H1 (cell line): ENCODE measurements at regions of chr1 and their contacts with region 1.

Region 1: DNA sequence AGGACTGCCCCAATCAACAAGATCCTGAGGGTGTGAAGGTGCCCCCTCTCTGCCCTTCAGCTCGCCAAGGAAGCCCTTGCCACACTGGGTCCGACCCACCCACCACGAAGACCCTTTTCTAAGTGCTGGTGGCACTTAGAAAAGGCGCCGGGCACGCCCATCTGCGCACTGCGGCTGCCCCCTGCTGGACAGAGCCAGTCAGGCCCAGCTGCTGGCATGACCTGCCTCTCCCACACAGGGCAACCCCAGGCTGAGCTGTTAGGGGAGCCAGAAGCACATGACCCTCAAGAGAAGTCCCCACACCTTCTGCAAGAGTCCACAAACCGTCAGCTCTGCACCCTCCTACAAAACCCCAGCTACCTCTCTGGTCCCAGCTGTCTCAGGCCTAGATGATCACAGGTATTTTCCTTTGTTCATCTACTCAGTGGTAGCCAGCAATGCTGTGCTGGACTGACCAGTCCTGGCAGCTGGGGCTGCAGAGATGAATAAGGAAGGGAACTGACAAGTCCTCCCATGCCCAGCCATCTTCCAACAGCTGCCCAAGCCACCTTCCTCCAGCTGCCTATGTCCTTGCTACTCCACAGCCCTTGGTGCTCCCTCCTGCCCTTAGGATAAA is 40.0 kb upstream of the ZC3H12A start:
- DNase-seq: peak; percentile 31 to 95
- H3K4me3 ChIP-seq: no peak overlapping the region
- H3K27ac ChIP-seq: no peak overlapping the region
- H3K4me1 ChIP-seq: peaks cover 0 to 17% (median 6%) of the 10 kb centered on the region in 4 experiments; a peak in 6 of 7 replicates
- H3K27me3 ChIP-seq: no peaks in the 10 kb centered on the region; a peak in 1 of 7 replicates
- CTCF ChIP-seq: peak; percentile 94 to 98 (median 97)
- EP300 ChIP-seq: no peak
- POLR2A ChIP-seq: no peak
- RAD21 ChIP-seq: peak; percentile 97

Region 2: GRCh38 chr1:37391211-37392011 is 43.0 kb before region 1 on chr1:
- CTCF ChIA-PET with region 1: interaction called, 34 read pairs
- POLR2A ChIA-PET with region 1: interaction called, 4 read pairs
- DNase-seq: peak in 1 of 2 experiments; percentile 57
- H3K4me3 ChIP-seq: no peak overlapping the region; a peak in 1 of 8 replicates
- H3K27ac ChIP-seq: no peak overlapping the region
- H3K4me1 ChIP-seq: peaks cover 2 to 21% (median 6%) of the 10 kb centered on the region in 4 experiments; a peak in 6 of 7 replicates
- H3K27me3 ChIP-seq: no peaks in the 10 kb centered on the region
- CTCF ChIP-seq: peak; percentile 33 to 63 (median 58)
- EP300 ChIP-seq: no peak
- POLR2A ChIP-seq: no peak
- RAD21 ChIP-seq: peak; percentile 39 to 66

Region 3: GRCh38 chr1:37399830-37400669 is 34.4 kb before region 1 on chr1:
- CTCF ChIA-PET with region 1: interaction called, 14 read pairs
- POLR2A ChIA-PET with region 1: interaction called, 5 read pairs
- DNase-seq: no peak
- H3K4me3 ChIP-seq: no peak overlapping the region
- H3K27ac ChIP-seq: no peak overlapping the region
- H3K4me1 ChIP-seq: peaks cover 0 to 4% (median 1%) of the 10 kb centered on the region in 4 experiments; a peak in 4 of 7 replicates
- H3K27me3 ChIP-seq: no peaks in the 10 kb centered on the region
- CTCF ChIP-seq: no peak
- EP300 ChIP-seq: no peak
- POLR2A ChIP-seq: no peak
- RAD21 ChIP-seq: no peak

Region 4: DNA sequence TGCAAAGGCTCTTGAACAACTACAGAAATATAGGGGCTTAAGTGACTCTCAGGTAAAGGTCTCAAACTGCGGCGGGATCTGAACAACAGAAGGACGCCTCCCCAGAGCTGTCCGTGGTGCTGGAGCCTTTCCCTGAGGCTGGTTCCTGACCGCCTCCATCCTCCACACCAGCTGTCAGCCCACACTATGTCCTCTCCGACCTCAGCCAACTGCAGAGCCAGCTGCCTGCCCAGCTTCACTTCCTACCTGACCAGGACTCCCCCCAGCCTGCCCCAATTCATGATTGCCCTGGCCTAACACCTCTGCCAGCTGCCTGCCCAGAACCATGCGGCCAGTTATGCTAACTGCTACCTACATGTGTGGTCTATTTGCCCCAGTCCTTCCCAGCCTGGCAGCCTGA is 23.6 kb before region 1 on chr1:
- CTCF ChIA-PET with region 1: interaction called, 21 read pairs
- POLR2A ChIA-PET with region 1: no interaction called
- DNase-seq: peak in 1 of 2 experiments; percentile 87
- H3K4me3 ChIP-seq: no peak overlapping the region
- H3K27ac ChIP-seq: no peak overlapping the region
- H3K4me1 ChIP-seq: peaks cover 0 to 4% (median 0%) of the 10 kb centered on the region in 4 experiments; a peak in 4 of 7 replicates
- H3K27me3 ChIP-seq: no peaks in the 10 kb centered on the region; a peak in 1 of 7 replicates
- CTCF ChIP-seq: no peak
- EP300 ChIP-seq: no peak
- POLR2A ChIP-seq: no peak
- RAD21 ChIP-seq: peak in 1 of 2 experiments; percentile 9; a peak in 1 of 4 replicates

Region 5: DNA sequence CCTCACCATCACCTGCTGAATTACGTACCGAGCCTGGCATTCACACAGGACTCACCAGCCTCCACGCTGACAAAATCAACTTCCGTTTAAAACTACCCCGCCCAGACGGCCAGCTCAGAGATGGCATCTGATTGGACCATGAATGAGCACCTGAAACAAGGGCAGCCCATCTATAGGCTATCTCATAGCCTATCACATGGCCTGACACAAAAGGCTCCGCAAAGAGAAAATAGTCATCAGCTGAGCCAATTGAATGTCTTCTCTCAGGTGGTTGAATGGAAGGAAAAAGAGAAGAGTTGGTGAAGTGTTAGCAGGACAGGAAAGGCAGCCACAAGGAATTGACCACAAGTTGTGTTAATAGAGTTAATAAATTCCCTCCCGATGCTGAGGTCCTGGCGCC is 10.6 kb before region 1 on chr1:
- CTCF ChIA-PET with region 1: interaction called, 16 read pairs
- POLR2A ChIA-PET with region 1: no interaction called
- DNase-seq: no peak
- H3K4me3 ChIP-seq: no peak overlapping the region
- H3K27ac ChIP-seq: no peak overlapping the region
- H3K4me1 ChIP-seq: no peaks in the 10 kb centered on the region
- H3K27me3 ChIP-seq: no peaks in the 10 kb centered on the region
- CTCF ChIP-seq: no peak
- EP300 ChIP-seq: no peak
- POLR2A ChIP-seq: no peak
- RAD21 ChIP-seq: no peak

Region 6: GRCh38 chr1:37449936-37450335 is 15.5 kb after region 1 on chr1:
- CTCF ChIA-PET with region 1: interaction called, 77 read pairs
- POLR2A ChIA-PET with region 1: interaction called, 4 read pairs
- DNase-seq: no peak
- H3K4me3 ChIP-seq: no peak overlapping the region
- H3K27ac ChIP-seq: no peak overlapping the region
- H3K4me1 ChIP-seq: peaks cover 0 to 23% (median 9%) of the 10 kb centered on the region in 4 experiments; a peak in 6 of 7 replicates
- H3K27me3 ChIP-seq: no peaks in the 10 kb centered on the region; a peak in 1 of 7 replicates
- CTCF ChIP-seq: no peak
- EP300 ChIP-seq: no peak
- POLR2A ChIP-seq: no peak
- RAD21 ChIP-seq: no peak